ENCODE measurements at regions of chr6 and their contacts with region 1.

Region 1: GRCh38 chr6:69835414-69836179 is 30.8 kb upstream of the COL19A1 start:
- DNase-seq: no peak
- ATAC-seq: peak; percentile 92
- H3K4me3 ChIP-seq: no peak overlapping the region
- H3K27ac ChIP-seq: no peak overlapping the region
- H3K4me1 ChIP-seq: peaks cover 3% of the 10 kb centered on the region; the same call in 1 of the 2 replicates
- H3K27me3 ChIP-seq: no peaks in the 10 kb centered on the region
- CTCF ChIP-seq: peak; percentile 82 to 92 (median 82)
- EP300 ChIP-seq: no peak
- POLR2A ChIP-seq: no peak
- RAD21 ChIP-seq: peak; percentile 89

Region 2: GRCh38 chr6:69791065-69791471 is 44.5 kb before region 1 on chr6:
- CTCF ChIA-PET with region 1: interaction called, 13 read pairs
- POLR2A ChIA-PET with region 1: no interaction called
- RAD21 ChIA-PET with region 1: interaction called, 7 read pairs
- SMC1A ChIA-PET with region 1: interaction called, 11 read pairs
- in situ Hi-C with region 1: no loop called
- intact Hi-C with region 1: no loop called
- DNase-seq: no peak
- ATAC-seq: peak; percentile 59
- H3K4me3 ChIP-seq: peak overlapping the region; percentile 43
- H3K27ac ChIP-seq: peak overlapping the region; percentile 46; the same call in 1 of the 2 replicates
- H3K4me1 ChIP-seq: peaks cover 27% of the 10 kb centered on the region
- H3K27me3 ChIP-seq: no peaks in the 10 kb centered on the region
- CTCF ChIP-seq: no peak
- EP300 ChIP-seq: no peak
- POLR2A ChIP-seq: no peak
- RAD21 ChIP-seq: no peak

Region 3: GRCh38 chr6:69820438-69820837 is 15.2 kb before region 1 on chr6:
- CTCF ChIA-PET with region 1: interaction called, 12 read pairs
- POLR2A ChIA-PET with region 1: no interaction called
- RAD21 ChIA-PET with region 1: interaction called, 11 read pairs
- SMC1A ChIA-PET with region 1: interaction called, 10 read pairs
- in situ Hi-C with region 1: no loop called
- intact Hi-C with region 1: no loop called
- DNase-seq: no peak
- ATAC-seq: no peak
- H3K4me3 ChIP-seq: no peak overlapping the region
- H3K27ac ChIP-seq: no peak overlapping the region
- H3K4me1 ChIP-seq: peaks cover 14% of the 10 kb centered on the region
- H3K27me3 ChIP-seq: no peaks in the 10 kb centered on the region
- CTCF ChIP-seq: no peak
- EP300 ChIP-seq: no peak
- POLR2A ChIP-seq: no peak
- RAD21 ChIP-seq: no peak

Region 4: GRCh38 chr6:69936674-69937363 is 101.2 kb after region 1 on chr6:
- CTCF ChIA-PET with region 1: interaction called, 3 read pairs
- POLR2A ChIA-PET with region 1: no interaction called
- RAD21 ChIA-PET with region 1: no interaction called
- SMC1A ChIA-PET with region 1: interaction called, 4 read pairs
- in situ Hi-C with region 1: no loop called
- intact Hi-C with region 1: loop called (anchors 5 kb)
- DNase-seq: no peak
- ATAC-seq: no peak
- H3K4me3 ChIP-seq: no peak overlapping the region
- H3K27ac ChIP-seq: no peak overlapping the region
- H3K4me1 ChIP-seq: no peaks in the 10 kb centered on the region
- H3K27me3 ChIP-seq: no peaks in the 10 kb centered on the region
- CTCF ChIP-seq: no peak
- EP300 ChIP-seq: no peak
- POLR2A ChIP-seq: no peak
- RAD21 ChIP-seq: no peak

Region 5: GRCh38 chr6:70059039-70059719 is 223.6 kb after region 1 on chr6:
- CTCF ChIA-PET with region 1: no interaction called
- POLR2A ChIA-PET with region 1: no interaction called
- RAD21 ChIA-PET with region 1: interaction called, 3 read pairs
- SMC1A ChIA-PET with region 1: no interaction called
- in situ Hi-C with region 1: no loop called
- intact Hi-C with region 1: loop called (anchors 1 kb)
- DNase-seq: no peak
- ATAC-seq: no peak
- H3K4me3 ChIP-seq: no peak overlapping the region
- H3K27ac ChIP-seq: no peak overlapping the region
- H3K4me1 ChIP-seq: no peaks in the 10 kb centered on the region
- H3K27me3 ChIP-seq: no peaks in the 10 kb centered on the region
- CTCF ChIP-seq: no peak
- EP300 ChIP-seq: no peak
- POLR2A ChIP-seq: no peak
- RAD21 ChIP-seq: no peak

Measured in GM12878 (cell line).